ENCODE measurements at regions of chr10 and their contacts with region 1.

Region 1: DNA sequence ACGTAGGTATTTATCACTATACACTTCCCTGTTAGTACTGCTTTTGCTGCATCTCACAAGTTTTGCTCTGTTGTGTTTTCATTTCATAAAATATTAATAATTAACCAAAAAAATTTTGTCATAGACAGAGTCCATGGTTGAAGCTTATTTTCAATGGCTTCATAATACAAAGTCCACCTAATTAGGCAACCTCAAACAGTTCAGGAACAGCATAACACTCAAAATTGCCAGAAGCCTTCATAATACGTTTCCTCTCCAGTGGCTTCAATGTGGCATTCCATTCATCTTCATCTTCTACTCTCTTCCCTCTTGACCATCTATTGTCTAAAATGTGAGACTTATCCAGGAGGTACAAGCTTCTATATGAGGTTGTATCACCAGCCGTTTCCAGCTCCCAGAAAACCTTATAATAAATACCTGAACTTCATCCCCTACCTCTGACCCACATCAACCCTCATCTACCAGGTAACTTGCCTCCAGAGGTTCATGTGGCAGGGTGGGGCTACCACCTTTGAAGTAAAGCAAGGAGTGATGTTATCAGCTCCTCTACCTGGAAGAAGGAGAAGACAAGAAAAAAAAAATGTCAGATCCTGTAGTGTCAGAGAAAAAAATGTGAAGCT is 337.4 kb downstream of the MALRD1 start:
- DNase-seq: no peak
- ATAC-seq: no peak
- H3K4me3 ChIP-seq: no peak overlapping the region
- H3K4me3 Mint-ChIP-seq: no peak overlapping the region
- H3K27ac ChIP-seq: no peak overlapping the region
- H3K27ac Mint-ChIP-seq: no peak overlapping the region
- H3K4me1 ChIP-seq: no peaks in the 10 kb centered on the region
- H3K4me1 Mint-ChIP-seq: no peaks in the 10 kb centered on the region
- H3K27me3 ChIP-seq: no peaks in the 10 kb centered on the region
- H3K27me3 Mint-ChIP-seq: no peaks in the 10 kb centered on the region
- CTCF ChIP-seq: no peak

Region 2: GRCh38 chr10:19310066-19310465 is 75.9 kb before region 1 on chr10:
- CTCF ChIA-PET with region 1: no interaction called
- POLR2A ChIA-PET with region 1: no interaction called
- intact Hi-C with region 1: loop called in 1 of 2 experiments (anchors 10 kb)
- DNase-seq: no peak
- ATAC-seq: no peak
- H3K4me3 ChIP-seq: no peak overlapping the region
- H3K4me3 Mint-ChIP-seq: no peak overlapping the region
- H3K27ac ChIP-seq: no peak overlapping the region
- H3K27ac Mint-ChIP-seq: no peak overlapping the region
- H3K4me1 ChIP-seq: no peaks in the 10 kb centered on the region
- H3K4me1 Mint-ChIP-seq: no peaks in the 10 kb centered on the region
- H3K27me3 ChIP-seq: no peaks in the 10 kb centered on the region
- H3K27me3 Mint-ChIP-seq: no peaks in the 10 kb centered on the region
- CTCF ChIP-seq: no peak

Region 3: GRCh38 chr10:19367176-19367575 is 18.8 kb before region 1 on chr10:
- CTCF ChIA-PET with region 1: no interaction called
- POLR2A ChIA-PET with region 1: no interaction called
- intact Hi-C with region 1: no loop called
- DNase-seq: no peak
- ATAC-seq: no peak
- H3K4me3 ChIP-seq: no peak overlapping the region
- H3K4me3 Mint-ChIP-seq: no peak overlapping the region
- H3K27ac ChIP-seq: no peak overlapping the region
- H3K27ac Mint-ChIP-seq: no peak overlapping the region
- H3K4me1 ChIP-seq: no peaks in the 10 kb centered on the region
- H3K4me1 Mint-ChIP-seq: no peaks in the 10 kb centered on the region
- H3K27me3 ChIP-seq: no peaks in the 10 kb centered on the region
- H3K27me3 Mint-ChIP-seq: no peaks in the 10 kb centered on the region
- CTCF ChIP-seq: no peak

Measured in CD8-positive, alpha-beta T cell (primary cell).